ENCODE measurements at regions of chr10 and their contacts with region 1.

Region 1: DNA sequence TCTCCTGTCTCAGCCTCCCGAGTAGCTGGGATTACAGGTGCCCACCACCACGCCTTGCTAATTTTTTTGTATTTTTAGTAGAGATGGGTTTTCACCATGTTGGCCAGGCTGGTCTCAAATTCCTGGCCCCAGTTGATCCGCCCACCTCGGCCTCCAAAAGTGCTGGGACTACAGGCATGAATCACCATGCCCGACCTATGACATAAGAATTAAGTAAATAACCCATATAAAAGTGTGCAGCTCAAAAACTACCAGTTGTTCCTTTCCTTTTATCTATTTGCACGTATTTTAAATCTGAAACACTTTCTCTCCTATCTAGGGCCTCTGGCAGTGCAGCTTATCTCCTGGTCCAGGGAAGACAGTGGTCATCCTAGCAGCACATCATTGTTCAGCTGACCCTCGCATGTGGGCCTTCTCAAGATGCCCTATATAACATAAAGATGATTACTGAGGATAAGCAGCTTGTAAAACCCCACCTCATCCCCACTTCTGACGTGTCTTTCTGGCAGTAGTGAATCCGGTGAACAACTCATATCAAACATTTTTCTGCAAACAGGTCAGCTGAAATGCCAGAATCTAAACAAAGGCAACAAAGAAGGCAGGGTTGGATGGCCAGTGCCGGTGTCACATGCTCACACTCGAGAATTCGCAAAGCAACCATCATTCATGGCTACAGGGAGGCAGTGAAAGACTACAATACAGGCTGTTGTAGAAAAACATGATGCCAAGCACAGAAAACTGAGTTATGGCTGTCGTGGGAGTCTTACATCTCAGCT is 36.0 kb upstream of the KCNIP2 start:
- DNase-seq: no peak
- H3K27ac ChIP-seq: no peak overlapping the region
- CTCF ChIP-seq: no peak

Region 2: GRCh38 chr10:100607439-100607838 is 1272.2 kb before region 1 on chr10:
- CTCF ChIA-PET with region 1: interaction called, 10 read pairs
- POLR2A ChIA-PET with region 1: no interaction called
- DNase-seq: no peak
- H3K27ac ChIP-seq: no peak overlapping the region
- CTCF ChIP-seq: no peak

Region 3: GRCh38 chr10:101897633-101898032 is 18.0 kb after region 1 on chr10:
- CTCF ChIA-PET with region 1: no interaction called
- POLR2A ChIA-PET with region 1: no interaction called
- DNase-seq: peak; percentile 34
- H3K27ac ChIP-seq: no peak overlapping the region
- CTCF ChIP-seq: no peak

Measured in RWPE1 (cell line).